HEK293 (cell line): ENCODE measurements at regions of chr12 and their contacts with region 1.

Region 1: DNA sequence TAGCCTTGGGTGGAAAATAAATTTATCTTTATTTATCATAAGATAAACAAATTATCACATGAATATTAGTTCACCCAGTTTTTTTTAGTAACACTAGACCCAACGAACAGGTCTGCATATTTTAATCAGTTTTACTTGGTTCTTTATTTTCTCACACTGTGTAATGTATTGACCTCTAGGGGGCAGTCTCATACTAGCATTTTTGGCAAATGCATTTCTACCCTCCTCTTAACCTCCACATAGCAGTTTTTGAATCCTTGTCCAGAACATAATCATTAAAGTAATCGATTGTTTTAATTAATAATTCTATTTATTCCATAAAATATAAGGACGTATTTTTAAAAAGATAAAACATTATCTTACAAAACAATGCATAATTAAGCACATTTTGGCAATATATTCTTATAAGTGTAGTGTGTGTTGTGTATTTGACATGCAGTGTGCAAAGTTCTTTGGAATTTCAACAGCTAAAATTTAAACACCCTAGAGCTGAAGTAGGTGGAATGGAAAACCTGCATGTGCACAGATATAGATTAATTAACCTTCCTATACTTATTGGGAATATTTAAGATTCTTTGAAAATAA is 31.6 kb upstream of the PTPRQ start:
- H3K4me3 ChIP-seq: no peak overlapping the region
- H3K27ac ChIP-seq: no peak overlapping the region
- H3K4me1 ChIP-seq: no peaks in the 10 kb centered on the region
- CTCF ChIP-seq: no peak

Region 2: GRCh38 chr12:80432055-80432454 is 19.6 kb after region 1 on chr12:
- CTCF ChIA-PET with region 1: no interaction called
- POLR2A ChIA-PET with region 1: no interaction called
- H3K4me3 ChIP-seq: no peak overlapping the region
- H3K27ac ChIP-seq: no peak overlapping the region
- H3K4me1 ChIP-seq: no peaks in the 10 kb centered on the region
- CTCF ChIP-seq: no peak

Region 3: DNA sequence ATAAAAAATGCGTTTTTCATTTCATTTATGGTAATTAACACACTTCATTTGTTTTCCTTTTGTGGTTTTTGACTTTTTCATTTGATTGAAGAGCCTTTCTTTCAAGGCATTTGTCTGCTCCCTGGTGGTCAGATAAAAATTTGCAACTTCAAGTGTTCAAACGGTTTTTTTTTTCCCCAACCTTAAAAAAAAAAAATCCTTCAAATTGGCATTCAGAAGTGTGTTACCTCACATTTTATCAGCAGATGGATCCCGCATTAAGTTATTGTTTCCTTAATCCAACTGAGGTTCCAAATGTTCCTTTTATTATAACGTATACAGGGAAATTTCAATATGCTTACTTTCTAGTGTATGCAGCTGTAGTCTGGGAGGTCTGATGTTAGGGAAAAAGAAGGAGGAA is 351.4 kb after region 1 on chr12:
- CTCF ChIA-PET with region 1: interaction called, 17 read pairs
- POLR2A ChIA-PET with region 1: no interaction called
- H3K4me3 ChIP-seq: no peak overlapping the region
- H3K27ac ChIP-seq: no peak overlapping the region
- H3K4me1 ChIP-seq: no peaks in the 10 kb centered on the region
- CTCF ChIP-seq: 0 out of 2 replicates have a peak, but pooled peaks have one; percentile 16